Activated CD4-positive, alpha-beta memory T cell treated with anti-CD3 and anti-CD28 coated beads, Interleukin-2, amount 10 ng/mL, durations not matched to agents 7 days and 5 days (primary cell): ENCODE measurements at regions of chr4 and their contacts with region 1.

Region 1: GRCh38 chr4:152535903-152536544 is at the start of gene FBXW7:
- DNase-seq: peak; percentile 100
- H3K4me3 Mint-ChIP-seq: peak within 1 kb of the TSS; percentile 86
- H3K27ac Mint-ChIP-seq: peak within 1 kb of the TSS; percentile 97
- H3K4me1 Mint-ChIP-seq: peaks cover 50% of the 10 kb centered on the region
- H3K27me3 Mint-ChIP-seq: no peaks in the 10 kb centered on the region
- total RNA-seq, gene FBXW7: 59.8 to 66.8 TPM

Region 2: GRCh38 chr4:152500800-152501434 is 35.1 kb before region 1 on chr4:
- CTCF ChIA-PET with region 1: interaction called, 33 read pairs
- POLR2A ChIA-PET with region 1: interaction called, 55 read pairs
- DNase-seq: peak; percentile 51
- H3K4me3 Mint-ChIP-seq: no peak overlapping the region
- H3K27ac Mint-ChIP-seq: no peak overlapping the region
- H3K4me1 Mint-ChIP-seq: peaks cover 25% of the 10 kb centered on the region
- H3K27me3 Mint-ChIP-seq: no peaks in the 10 kb centered on the region

Region 3: DNA sequence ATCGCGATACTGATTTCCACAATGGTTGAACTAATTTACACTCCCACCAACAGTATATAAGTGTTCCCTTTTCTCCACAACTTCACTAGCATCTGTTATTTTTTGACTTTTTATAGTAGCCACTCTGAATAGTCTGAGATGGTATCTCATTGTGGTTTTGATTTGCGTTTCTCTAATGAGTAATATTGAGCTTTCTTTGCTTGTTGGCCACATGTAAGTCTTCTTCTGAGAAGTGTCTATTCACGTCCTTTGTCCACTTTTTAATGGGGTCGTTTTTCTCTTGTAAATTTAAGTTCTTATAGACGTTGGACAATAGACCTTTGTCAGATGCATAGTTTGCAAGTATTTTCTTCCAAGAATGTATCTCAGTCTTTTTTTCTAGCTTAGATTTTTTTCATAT is 10.2 kb before region 1 on chr4:
- CTCF ChIA-PET with region 1: interaction called, 16 read pairs
- POLR2A ChIA-PET with region 1: interaction called, 128 read pairs
- DNase-seq: no peak
- H3K4me3 Mint-ChIP-seq: no peak overlapping the region
- H3K27ac Mint-ChIP-seq: no peak overlapping the region
- H3K4me1 Mint-ChIP-seq: peaks cover 63% of the 10 kb centered on the region
- H3K27me3 Mint-ChIP-seq: no peaks in the 10 kb centered on the region

Region 4: DNA sequence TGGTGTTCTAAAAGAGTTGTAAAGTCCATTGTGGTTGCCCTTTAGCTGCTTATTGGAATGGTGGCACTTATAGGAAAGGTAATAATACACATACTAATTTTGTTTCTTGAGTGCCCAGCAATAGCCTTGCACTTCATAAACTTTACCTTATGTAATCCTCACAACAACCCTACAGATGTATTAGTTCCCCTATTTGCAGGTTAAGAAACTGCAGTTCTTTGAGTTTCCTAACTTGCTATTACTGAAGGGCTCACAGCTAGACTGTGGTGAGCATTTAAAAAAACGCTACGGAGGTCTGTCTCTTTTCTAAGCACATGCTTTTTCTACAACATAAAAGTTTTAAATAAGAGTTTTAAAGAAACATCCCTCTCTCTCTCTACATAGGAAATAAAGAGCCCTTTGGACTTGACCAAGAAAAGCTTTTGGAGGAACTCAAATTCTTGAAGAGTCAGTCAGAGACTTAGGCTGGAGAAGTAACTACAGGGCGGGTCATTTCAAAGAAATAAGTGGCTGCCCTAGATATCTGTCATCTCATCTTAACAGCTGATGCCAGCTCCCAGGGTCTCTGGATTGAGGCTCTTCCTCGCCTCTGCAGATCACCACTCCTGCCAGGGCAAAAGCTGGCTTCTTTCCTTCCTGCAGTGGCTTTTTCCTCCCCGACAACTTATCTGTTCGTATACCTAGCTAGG is 41.8 kb after region 1 on chr4:
- CTCF ChIA-PET with region 1: no interaction called
- POLR2A ChIA-PET with region 1: interaction called, 11 read pairs
- DNase-seq: no peak
- H3K4me3 Mint-ChIP-seq: no peak overlapping the region
- H3K27ac Mint-ChIP-seq: no peak overlapping the region
- H3K4me1 Mint-ChIP-seq: no peaks in the 10 kb centered on the region
- H3K27me3 Mint-ChIP-seq: peaks cover 7% of the 10 kb centered on the region

Region 5: GRCh38 chr4:152640058-152640833 is 104.2 kb after region 1 on chr4:
- CTCF ChIA-PET with region 1: interaction called, 6 read pairs
- POLR2A ChIA-PET with region 1: interaction called, 32 read pairs
- DNase-seq: no peak
- H3K4me3 Mint-ChIP-seq: no peak overlapping the region
- H3K27ac Mint-ChIP-seq: no peak overlapping the region
- H3K4me1 Mint-ChIP-seq: peaks cover 42% of the 10 kb centered on the region
- H3K27me3 Mint-ChIP-seq: no peaks in the 10 kb centered on the region

Region 6: GRCh38 chr4:152679414-152680281 is 143.6 kb after region 1 on chr4 and contains the start of gene TMEM154:
- CTCF ChIA-PET with region 1: interaction called, 6 read pairs
- POLR2A ChIA-PET with region 1: interaction called, 35 read pairs
- DNase-seq: peak; percentile 84
- H3K4me3 Mint-ChIP-seq: peak within 1 kb of the TSS; percentile 90
- H3K27ac Mint-ChIP-seq: peak within 1 kb of the TSS; percentile 92
- H3K4me1 Mint-ChIP-seq: peaks cover 74% of the 10 kb centered on the region
- H3K27me3 Mint-ChIP-seq: no peaks in the 10 kb centered on the region
- total RNA-seq, gene TMEM154: 47.1 to 50.0 TPM